GM13977 (cell line): ENCODE measurements at regions of chr6 and their contacts with region 1.

Region 1: GRCh38 chr6:105112577-105112976 is 67.2 kb downstream of the POPDC3 start:
- DNase-seq: no peak
- CTCF ChIP-seq: no peak

Region 2: DNA sequence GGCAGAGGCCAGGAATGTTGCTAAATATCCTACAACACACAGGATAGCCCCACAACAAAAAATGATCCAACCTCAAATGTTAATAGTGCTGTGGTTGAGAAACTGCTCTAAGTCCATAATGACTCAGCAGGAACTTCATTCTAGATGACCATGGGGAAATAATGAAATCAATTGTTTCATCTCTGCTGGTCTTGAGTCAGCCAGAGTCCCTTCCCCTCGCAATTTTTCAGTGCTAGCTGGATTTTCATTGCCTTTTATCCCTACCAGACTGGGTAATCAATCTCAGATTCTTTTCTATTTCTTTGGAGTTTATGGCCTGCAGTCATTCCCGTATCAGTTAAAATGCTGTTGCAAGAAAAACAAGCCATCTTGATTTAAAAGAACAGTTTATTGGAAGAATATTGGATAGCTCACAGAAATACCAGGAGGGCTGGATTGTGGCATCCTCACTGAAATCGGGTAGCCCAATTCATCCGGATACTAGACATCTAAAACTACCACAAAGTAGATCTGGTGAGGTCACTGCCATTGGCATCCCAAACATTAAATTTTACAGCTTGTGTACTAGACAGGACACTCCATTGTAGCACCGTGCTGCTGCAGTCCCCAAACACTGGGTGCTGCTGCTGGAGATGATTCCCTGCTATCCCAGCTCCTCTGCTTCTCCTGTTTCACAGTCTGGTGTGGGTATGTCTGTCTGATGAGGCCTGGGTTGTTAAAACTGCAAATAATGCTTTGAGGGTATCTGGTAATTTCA is 97.6 kb after region 1 on chr6:
- in situ Hi-C with region 1: loop called (anchors 25 kb)
- DNase-seq: no peak
- CTCF ChIP-seq: no peak